GM13977 (cell line): ENCODE measurements at regions of chr1 and their contacts with region 1.

Region 1: GRCh38 chr1:115771847-115772457 is 3.4 kb upstream of the CASQ2 start:
- DNase-seq: peak; percentile 67
- CTCF ChIP-seq: peak; percentile 77

Region 2: GRCh38 chr1:115251856-115252255 is 520.1 kb before region 1 on chr1:
- in situ Hi-C with region 1: no loop called
- DNase-seq: no peak
- CTCF ChIP-seq: no peak

Region 3: DNA sequence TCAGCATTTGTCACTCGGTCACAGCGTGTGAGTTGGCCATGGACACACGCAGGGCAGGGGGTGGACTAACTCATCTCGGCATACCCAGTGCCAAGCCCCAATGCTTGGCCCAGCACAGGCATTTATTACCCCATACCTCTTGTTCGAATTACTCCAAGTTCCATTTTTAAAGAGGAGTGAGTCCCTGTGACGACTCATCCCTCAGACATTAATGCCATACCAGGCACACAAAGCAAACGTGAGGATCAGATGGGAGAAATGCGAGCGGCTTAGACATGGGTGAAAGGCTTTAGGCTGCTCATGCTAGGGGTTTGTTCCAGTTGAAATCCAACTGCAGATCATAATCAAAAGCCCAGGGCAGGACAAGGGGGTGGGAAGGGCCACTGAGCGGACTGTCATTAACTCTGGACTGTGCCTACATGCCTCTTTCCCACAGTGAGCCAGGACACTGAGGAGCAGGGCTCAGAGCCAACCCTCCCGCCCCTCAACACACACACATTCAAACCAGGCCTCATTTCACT is 315.5 kb before region 1 on chr1:
- in situ Hi-C with region 1: no loop called
- DNase-seq: no peak
- CTCF ChIP-seq: no peak

Region 4: GRCh38 chr1:115594403-115594999 is 177.5 kb before region 1 on chr1:
- in situ Hi-C with region 1: no loop called
- DNase-seq: no peak
- CTCF ChIP-seq: no peak

Region 5: DNA sequence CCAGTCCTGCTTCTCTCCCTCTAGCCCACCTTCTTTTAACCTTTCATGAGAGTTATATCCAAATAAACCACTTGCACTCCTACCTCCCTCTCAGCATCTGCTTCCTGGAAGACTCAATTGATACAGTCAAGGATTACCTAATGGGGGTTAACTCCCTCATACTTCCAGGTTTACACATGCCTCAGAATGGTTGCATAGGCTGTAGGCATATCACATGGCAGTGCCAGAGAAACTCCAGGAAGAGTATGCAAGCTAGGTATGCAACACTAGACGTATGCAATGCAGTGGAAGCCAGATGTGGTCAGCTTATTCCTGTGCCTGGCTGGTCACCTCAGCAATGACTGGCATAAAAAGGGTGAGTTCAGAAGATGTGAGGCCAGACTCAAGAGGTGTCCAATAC is 162.9 kb before region 1 on chr1:
- in situ Hi-C with region 1: loop called (anchors 10 kb)
- DNase-seq: no peak
- CTCF ChIP-seq: no peak

Region 6: GRCh38 chr1:115717541-115717940 is 54.4 kb before region 1 on chr1:
- in situ Hi-C with region 1: loop called (anchors 5 kb)
- DNase-seq: peak; percentile 31
- CTCF ChIP-seq: peak; percentile 62